ENCODE measurements at regions of chr2 and their contacts with region 1.

Region 1: GRCh38 chr2:25991965-25992364 is 9.7 kb upstream of the KIF3C start:
- DNase-seq: no peak
- H3K4me3 ChIP-seq: no peak overlapping the region
- H3K4me3 Mint-ChIP-seq: peak overlapping the region in 4 of 8 donors; percentile 27 to 86 (median 68)
- H3K27ac ChIP-seq: no peak overlapping the region
- H3K27ac Mint-ChIP-seq: peak overlapping the region in 4 of 7 donors; percentile 11 to 78 (median 47)
- H3K4me1 ChIP-seq: peaks cover 9% of the 10 kb centered on the region
- H3K4me1 Mint-ChIP-seq: peaks cover 6 to 14% (median 10%) of the 10 kb centered on the region in 4 donors
- H3K27me3 ChIP-seq: no peaks in the 10 kb centered on the region
- H3K27me3 Mint-ChIP-seq: no peaks in the 10 kb centered on the region

Region 2: DNA sequence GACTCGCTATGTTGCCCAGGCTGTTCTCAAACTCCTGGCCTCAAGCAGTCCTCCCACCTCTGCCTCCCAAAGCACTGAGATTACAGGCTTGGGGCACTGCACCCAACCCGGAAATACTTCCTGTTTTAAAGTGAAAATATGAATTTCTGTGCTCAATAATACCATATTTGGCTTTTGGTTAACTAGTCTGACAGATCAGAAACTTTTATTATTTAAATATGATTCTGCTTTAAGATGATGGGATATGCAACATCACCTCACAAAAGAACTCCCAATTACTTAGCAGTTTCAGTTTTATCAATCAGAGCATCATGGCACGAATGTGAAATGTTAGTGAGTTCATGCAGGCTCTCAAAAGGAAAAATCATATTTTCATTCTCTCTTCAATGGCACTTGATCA is 1319.4 kb before region 1 on chr2:
- CTCF ChIA-PET with region 1: no interaction called
- POLR2A ChIA-PET with region 1: no interaction called
- intact Hi-C with region 1: no loop called
- DNase-seq: no peak
- H3K4me3 ChIP-seq: no peak overlapping the region
- H3K4me3 Mint-ChIP-seq: peak overlapping the region in 1 of 8 donors; percentile 18
- H3K27ac ChIP-seq: no peak overlapping the region
- H3K27ac Mint-ChIP-seq: no peak overlapping the region
- H3K4me1 ChIP-seq: peaks cover 10% of the 10 kb centered on the region
- H3K4me1 Mint-ChIP-seq: peaks cover 3 to 12% (median 8%) of the 10 kb centered on the region in 4 donors
- H3K27me3 ChIP-seq: no peaks in the 10 kb centered on the region
- H3K27me3 Mint-ChIP-seq: no peaks in the 10 kb centered on the region

Region 3: DNA sequence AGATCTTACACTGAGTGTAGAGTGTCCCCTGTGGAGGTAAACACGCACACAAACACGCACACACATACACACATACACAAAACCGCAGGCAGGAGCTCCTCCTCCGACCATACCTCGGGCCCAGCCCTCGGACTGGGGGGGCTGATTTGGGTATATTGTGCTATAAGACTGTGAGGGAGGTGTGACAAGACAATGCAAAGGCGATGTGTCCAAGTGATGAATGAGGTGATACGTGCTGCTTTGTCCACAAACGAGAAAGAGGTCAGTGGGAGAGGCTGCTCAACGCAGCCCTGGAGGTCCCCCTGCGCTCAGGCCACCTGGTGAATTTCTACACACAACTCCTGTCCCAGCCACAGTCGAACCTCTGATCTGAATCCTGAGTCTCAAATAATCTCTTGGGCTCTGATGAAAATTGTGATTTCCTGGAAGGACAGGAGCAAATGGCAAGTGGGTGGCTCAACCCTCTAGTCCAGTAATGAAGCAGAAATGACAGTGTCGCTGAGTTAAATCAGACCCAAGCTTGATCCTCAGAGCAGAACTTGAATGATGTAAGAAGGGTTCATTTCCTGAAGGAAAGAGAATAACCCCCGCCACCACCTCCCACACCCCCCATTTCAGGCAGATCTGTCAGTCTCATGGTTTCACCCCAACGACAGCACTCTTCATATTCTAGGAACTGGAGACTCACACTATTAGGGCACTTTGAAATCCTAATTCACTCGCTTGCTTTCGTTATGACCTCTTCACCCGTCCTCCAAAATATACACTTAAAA is 64.8 kb before region 1 on chr2:
- CTCF ChIA-PET with region 1: no interaction called
- POLR2A ChIA-PET with region 1: no interaction called
- intact Hi-C with region 1: no loop called
- DNase-seq: no peak
- H3K4me3 ChIP-seq: no peak overlapping the region
- H3K4me3 Mint-ChIP-seq: no peak overlapping the region
- H3K27ac ChIP-seq: no peak overlapping the region
- H3K27ac Mint-ChIP-seq: no peak overlapping the region
- H3K4me1 ChIP-seq: no peaks in the 10 kb centered on the region
- H3K4me1 Mint-ChIP-seq: no peaks in the 10 kb centered on the region
- H3K27me3 ChIP-seq: no peaks in the 10 kb centered on the region
- H3K27me3 Mint-ChIP-seq: no peaks in the 10 kb centered on the region

Region 4: DNA sequence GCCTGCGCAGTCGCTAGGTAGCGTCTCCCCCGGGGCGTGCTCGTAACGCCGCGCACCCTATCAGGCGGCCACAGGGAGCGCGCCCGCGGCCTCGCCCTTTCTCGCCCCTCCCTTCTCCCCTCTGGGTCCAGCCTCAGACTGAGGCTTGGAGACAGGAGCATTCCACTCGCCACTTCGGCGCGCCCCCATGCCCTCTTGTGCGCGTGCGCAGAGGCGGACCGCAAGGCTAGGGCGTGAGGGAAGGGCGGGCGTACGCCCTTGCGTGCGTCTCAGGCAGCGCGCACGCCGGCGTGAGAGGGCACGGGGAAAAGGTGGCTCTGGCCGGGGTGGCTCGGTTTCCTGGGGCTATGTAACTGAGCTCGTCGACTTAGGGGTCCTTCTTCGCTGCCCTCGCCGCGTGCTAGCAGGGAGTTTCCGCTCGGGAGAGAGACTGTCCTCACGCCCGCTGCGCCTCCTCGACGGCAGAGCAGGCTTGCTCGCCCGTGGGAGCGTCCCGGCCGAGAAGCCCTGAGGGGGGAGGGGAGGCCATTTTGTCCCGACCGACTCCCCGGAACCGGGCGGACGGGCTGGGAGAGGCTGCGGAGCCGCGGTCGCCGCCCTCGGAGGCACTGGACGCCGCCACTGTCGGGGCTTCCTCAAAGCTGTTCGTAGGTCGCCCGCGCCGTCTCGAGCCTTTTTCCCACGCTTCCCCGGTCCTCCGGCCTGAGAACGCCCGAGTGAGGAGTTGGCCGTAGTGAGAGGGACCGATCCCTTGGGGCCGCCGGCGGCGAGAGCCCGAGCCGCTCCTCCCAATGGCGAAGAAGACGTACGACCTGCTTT is 42.1 kb after region 1 on chr2 and contains the start of gene RAB10:
- CTCF ChIA-PET with region 1: interaction called, 6 read pairs
- POLR2A ChIA-PET with region 1: interaction called, 6 read pairs
- intact Hi-C with region 1: loop called (anchors 1 kb)
- DNase-seq: peak; percentile 99
- H3K4me3 ChIP-seq: peak within 1 kb of the TSS; percentile 94 to 99
- H3K4me3 Mint-ChIP-seq: peak within 1 kb of the TSS; percentile 94 to 99 (median 97)
- H3K27ac ChIP-seq: peak within 1 kb of the TSS; percentile 86
- H3K27ac Mint-ChIP-seq: peak within 1 kb of the TSS; percentile 89 to 99 (median 97)
- H3K4me1 ChIP-seq: peaks cover 42% of the 10 kb centered on the region
- H3K4me1 Mint-ChIP-seq: peaks cover 16 to 46% (median 36%) of the 10 kb centered on the region in 4 donors
- H3K27me3 ChIP-seq: no peaks in the 10 kb centered on the region
- H3K27me3 Mint-ChIP-seq: no peaks in the 10 kb centered on the region
- total RNA-seq, gene RAB10: 67.8 to 77.2 TPM

Region 5: GRCh38 chr2:26144953-26145680 is 153.2 kb after region 1 on chr2:
- CTCF ChIA-PET with region 1: interaction called, 70 read pairs
- POLR2A ChIA-PET with region 1: interaction called, 5 read pairs
- intact Hi-C with region 1: loop called (anchors 1 kb)
- DNase-seq: peak; percentile 47 to 58 (median 49)
- H3K4me3 ChIP-seq: no peak overlapping the region
- H3K4me3 Mint-ChIP-seq: no peak overlapping the region
- H3K27ac ChIP-seq: no peak overlapping the region
- H3K27ac Mint-ChIP-seq: no peak overlapping the region
- H3K4me1 ChIP-seq: no peaks in the 10 kb centered on the region
- H3K4me1 Mint-ChIP-seq: peaks cover 0 to 4% (median 2%) of the 10 kb centered on the region in 4 donors
- H3K27me3 ChIP-seq: peaks cover 6% of the 10 kb centered on the region
- H3K27me3 Mint-ChIP-seq: peaks cover 9 to 10% of the 10 kb centered on the region in 2 donors

Region 6: GRCh38 chr2:26184555-26185303 is 192.8 kb after region 1 on chr2:
- CTCF ChIA-PET with region 1: interaction called, 7 read pairs
- POLR2A ChIA-PET with region 1: interaction called, 4 read pairs
- intact Hi-C with region 1: loop called (anchors 1 kb)
- DNase-seq: peak; percentile 83 to 89 (median 87)
- H3K4me3 ChIP-seq: peak overlapping the region; percentile 24 to 64
- H3K4me3 Mint-ChIP-seq: peak overlapping the region; percentile 83 to 89 (median 86)
- H3K27ac ChIP-seq: peak overlapping the region; percentile 24
- H3K27ac Mint-ChIP-seq: peak overlapping the region in 2 of 7 donors; percentile 46 to 83
- H3K4me1 ChIP-seq: peaks cover 19% of the 10 kb centered on the region
- H3K4me1 Mint-ChIP-seq: peaks cover 10 to 26% (median 18%) of the 10 kb centered on the region in 4 donors
- H3K27me3 ChIP-seq: no peaks in the 10 kb centered on the region
- H3K27me3 Mint-ChIP-seq: peaks cover 8 to 15% of the 10 kb centered on the region in 2 donors

Region 7: DNA sequence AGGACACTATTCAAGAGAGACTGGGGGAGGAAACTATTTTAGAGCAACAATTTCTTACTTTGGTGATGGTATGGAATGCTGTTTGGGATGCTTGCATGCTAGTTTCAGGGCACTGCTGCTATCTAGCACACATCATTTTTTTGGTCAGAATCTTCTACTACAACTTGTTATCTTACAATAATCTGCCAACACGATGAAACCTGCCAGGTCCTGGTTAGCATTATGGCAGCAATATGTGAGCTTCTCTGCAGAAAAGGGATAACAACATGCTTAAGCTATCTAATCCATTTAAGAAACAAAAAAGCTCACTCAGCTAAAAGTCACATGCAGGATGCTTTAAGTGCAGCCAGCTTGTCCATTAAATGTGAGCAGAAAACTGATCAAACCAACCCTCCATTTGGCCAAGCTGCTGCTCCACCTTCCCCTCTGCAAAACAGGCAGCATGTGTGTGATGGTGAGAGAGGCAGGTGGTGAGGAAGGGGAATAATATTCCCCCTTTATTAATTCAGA is 211.1 kb after region 1 on chr2:
- CTCF ChIA-PET with region 1: no interaction called
- POLR2A ChIA-PET with region 1: no interaction called
- intact Hi-C with region 1: no loop called
- DNase-seq: no peak
- H3K4me3 ChIP-seq: no peak overlapping the region
- H3K4me3 Mint-ChIP-seq: no peak overlapping the region
- H3K27ac ChIP-seq: no peak overlapping the region
- H3K27ac Mint-ChIP-seq: peak overlapping the region in 1 of 7 donors; percentile 32
- H3K4me1 ChIP-seq: no peaks in the 10 kb centered on the region
- H3K4me1 Mint-ChIP-seq: no peaks in the 10 kb centered on the region
- H3K27me3 ChIP-seq: no peaks in the 10 kb centered on the region
- H3K27me3 Mint-ChIP-seq: no peaks in the 10 kb centered on the region

Region 8: DNA sequence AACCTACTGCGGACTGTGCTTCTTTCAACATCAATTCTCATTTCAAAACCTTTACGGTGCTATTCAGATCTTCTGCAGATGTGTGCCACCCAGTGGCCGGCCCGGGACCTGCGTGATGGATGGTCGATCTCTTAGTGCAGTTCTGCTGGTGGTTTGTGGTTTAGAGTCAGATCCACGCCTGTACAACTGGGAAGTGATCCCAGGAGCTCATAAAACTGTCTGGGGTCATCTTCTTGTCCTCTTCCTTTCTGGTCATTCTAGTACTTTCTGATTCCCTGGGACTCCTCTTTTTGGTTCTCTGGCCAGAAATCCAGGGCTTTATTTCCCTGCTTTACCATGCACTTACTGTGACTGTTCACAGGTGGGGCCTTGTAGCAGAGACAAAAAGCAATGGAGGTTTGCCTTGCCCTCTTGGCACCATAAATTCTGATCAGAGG is 338.2 kb after region 1 on chr2:
- CTCF ChIA-PET with region 1: interaction called, 5 read pairs
- POLR2A ChIA-PET with region 1: no interaction called
- intact Hi-C with region 1: loop called (anchors 1 kb)
- DNase-seq: peak; percentile 71 to 81 (median 73)
- H3K4me3 ChIP-seq: no peak overlapping the region
- H3K4me3 Mint-ChIP-seq: peak overlapping the region in 1 of 8 donors; percentile 60
- H3K27ac ChIP-seq: no peak overlapping the region
- H3K27ac Mint-ChIP-seq: peak overlapping the region in 2 of 7 donors; percentile 24 to 31
- H3K4me1 ChIP-seq: peaks cover 8% of the 10 kb centered on the region
- H3K4me1 Mint-ChIP-seq: peaks cover 6 to 10% (median 8%) of the 10 kb centered on the region in 4 donors
- H3K27me3 ChIP-seq: no peaks in the 10 kb centered on the region
- H3K27me3 Mint-ChIP-seq: no peaks in the 10 kb centered on the region

Region 9: DNA sequence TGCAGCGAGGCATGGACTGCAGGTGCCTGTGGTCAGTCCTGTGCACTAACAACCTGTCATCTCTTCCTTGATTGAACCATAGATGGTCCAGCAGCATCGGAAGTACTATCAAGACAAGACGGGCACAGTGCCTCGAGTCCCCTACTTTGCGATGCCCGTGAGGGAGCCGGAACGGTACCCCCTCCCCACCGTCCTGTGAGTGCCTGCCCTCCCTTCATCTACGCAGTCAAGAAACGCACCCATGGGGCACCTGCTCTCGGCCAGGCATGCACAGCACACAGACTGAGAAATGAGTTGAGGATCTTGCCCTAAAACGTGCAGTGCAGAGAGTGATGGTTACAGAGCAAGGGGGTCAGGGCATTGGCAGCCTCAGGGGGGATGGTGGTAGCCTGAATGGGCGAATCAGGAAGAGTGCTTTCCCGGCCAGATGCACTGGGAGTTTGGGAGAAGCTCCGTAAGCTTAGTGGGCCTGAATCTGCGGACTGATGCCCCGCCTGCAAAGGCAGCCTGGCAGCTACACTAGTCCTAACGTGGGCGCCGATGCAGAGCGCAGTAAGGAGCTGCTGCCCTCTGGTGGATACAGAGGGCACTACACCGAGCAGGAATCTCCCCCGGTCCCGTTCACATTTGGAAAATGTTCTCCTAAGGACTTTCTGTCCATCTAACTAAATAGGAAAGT is 585.6 kb after region 1 on chr2:
- CTCF ChIA-PET with region 1: interaction called, 8 read pairs
- POLR2A ChIA-PET with region 1: no interaction called
- intact Hi-C with region 1: loop called (anchors 5 kb)
- DNase-seq: peak; percentile 36 to 52 (median 50)
- H3K4me3 ChIP-seq: no peak overlapping the region
- H3K4me3 Mint-ChIP-seq: no peak overlapping the region
- H3K27ac ChIP-seq: no peak overlapping the region
- H3K27ac Mint-ChIP-seq: peak overlapping the region in 1 of 7 donors; percentile 9
- H3K4me1 ChIP-seq: no peaks in the 10 kb centered on the region
- H3K4me1 Mint-ChIP-seq: peaks cover 0 to 4% (median 1%) of the 10 kb centered on the region in 4 donors
- H3K27me3 ChIP-seq: no peaks in the 10 kb centered on the region
- H3K27me3 Mint-ChIP-seq: peaks cover 11 to 26% of the 10 kb centered on the region in 2 donors

Measured in CD4-positive, alpha-beta memory T cell (primary cell).